Gastrocnemius medialis (tissue), 4 donors: ENCODE measurements at regions of chr4 and their contacts with region 1.

Region 1: DNA sequence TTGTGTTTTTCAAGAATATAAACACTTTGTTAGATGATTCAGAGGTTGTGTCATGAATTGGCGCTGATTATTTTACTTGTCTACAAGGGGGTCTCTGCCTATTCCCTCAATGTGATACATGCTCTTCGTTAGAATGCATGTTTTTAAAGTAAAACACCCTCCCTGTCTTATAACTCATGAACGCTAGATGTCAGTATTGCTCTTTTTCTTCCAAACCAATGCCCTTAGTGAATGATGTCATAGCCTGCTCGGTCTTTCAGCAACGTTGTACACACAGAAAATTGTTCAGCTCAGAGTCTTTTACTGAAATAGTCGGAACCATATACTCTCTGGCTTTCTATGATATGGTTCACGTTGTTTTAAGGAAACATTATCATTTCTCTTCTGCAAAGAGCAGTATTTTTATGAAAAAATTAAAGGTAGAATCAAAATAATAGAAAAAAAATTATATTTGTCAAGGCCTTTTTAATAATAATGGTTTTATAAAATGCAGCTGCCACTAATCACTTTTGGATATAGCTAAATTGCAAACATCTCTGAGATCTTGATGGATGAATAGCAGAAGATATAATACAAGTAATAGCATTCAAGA is 292.9 kb downstream of the TLL1 start:
- DNase-seq: no peak
- ATAC-seq: peak in 1 of 2 donors; percentile 66
- H3K4me3 ChIP-seq: no peak overlapping the region
- H3K27ac ChIP-seq: no peak overlapping the region
- H3K4me1 ChIP-seq: no peaks in the 10 kb centered on the region
- H3K27me3 ChIP-seq: no peaks in the 10 kb centered on the region
- CTCF ChIP-seq: peak in 4 of 5 experiments; percentile 18 to 58 (median 56)
- POLR2A ChIP-seq: no peak

Region 2: GRCh38 chr4:165905405-165906027 is 260.4 kb before region 1 on chr4:
- in situ Hi-C with region 1: no loop called
- intact Hi-C with region 1: no loop called
- DNase-seq: no peak
- ATAC-seq: no peak
- H3K4me3 ChIP-seq: no peak overlapping the region
- H3K27ac ChIP-seq: peak overlapping the region in 3 of 4 donors; percentile 2 to 46 (median 11)
- H3K4me1 ChIP-seq: no peaks in the 10 kb centered on the region
- H3K27me3 ChIP-seq: no peaks in the 10 kb centered on the region
- CTCF ChIP-seq: no peak
- POLR2A ChIP-seq: no peak

Region 3: GRCh38 chr4:166252487-166253402 is 86.8 kb after region 1 on chr4:
- in situ Hi-C with region 1: no loop called
- intact Hi-C with region 1: loop called (anchors 5 kb)
- DNase-seq: no peak
- ATAC-seq: no peak
- H3K4me3 ChIP-seq: no peak overlapping the region
- H3K27ac ChIP-seq: no peak overlapping the region
- H3K4me1 ChIP-seq: no peaks in the 10 kb centered on the region
- H3K27me3 ChIP-seq: no peaks in the 10 kb centered on the region
- CTCF ChIP-seq: peak in 3 of 5 experiments; percentile 8 to 36 (median 27)
- POLR2A ChIP-seq: no peak